AG04449 (cell line): ENCODE measurements at regions of chr3 and their contacts with region 1.

Region 1: GRCh38 chr3:73508330-73508954 is 116.3 kb downstream of the PDZRN3 start:
- DNase-seq: no peak
- H3K4me3 ChIP-seq: no peak overlapping the region
- CTCF ChIP-seq: peak; percentile 71

Region 2: DNA sequence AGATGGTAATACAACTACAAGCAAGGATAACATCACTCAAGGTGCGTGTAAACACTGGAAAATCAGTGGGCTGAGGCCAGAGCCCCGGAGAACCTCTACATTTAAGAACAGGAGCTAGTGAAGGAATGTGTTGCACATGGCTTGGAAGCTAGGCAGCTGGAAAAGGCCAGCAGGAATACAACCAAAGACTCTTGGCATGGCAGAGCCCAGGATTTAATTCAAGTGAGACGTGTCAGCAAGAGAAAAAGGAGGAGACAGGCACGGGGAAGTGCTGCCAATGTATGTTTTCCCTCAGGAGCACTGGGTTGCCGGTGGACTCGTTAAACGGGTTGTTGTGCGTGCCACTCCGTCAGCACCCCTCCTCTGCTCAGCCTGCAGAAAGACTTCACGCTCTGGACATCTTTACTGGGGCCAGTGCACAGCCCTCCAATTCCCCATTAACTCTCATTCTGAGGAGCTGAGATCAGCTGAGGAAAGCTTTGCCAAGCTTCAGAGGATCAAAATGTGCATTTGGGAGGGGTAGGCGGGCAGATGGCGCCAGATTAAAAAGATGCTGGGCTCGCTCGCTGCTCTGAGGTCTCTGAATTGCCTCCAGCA is 12.5 kb after region 1 on chr3:
- CTCF ChIA-PET with region 1: interaction called, 20 read pairs
- POLR2A ChIA-PET with region 1: no interaction called
- DNase-seq: no peak
- H3K4me3 ChIP-seq: peak overlapping the region; percentile 7; the same call in 1 of the 2 replicates
- CTCF ChIP-seq: no peak

Region 3: GRCh38 chr3:73602170-73602569 is 93.7 kb after region 1 on chr3:
- CTCF ChIA-PET with region 1: interaction called, 18 read pairs
- POLR2A ChIA-PET with region 1: no interaction called
- DNase-seq: peak; percentile 91
- H3K4me3 ChIP-seq: no peak overlapping the region
- CTCF ChIP-seq: no peak

Region 4: DNA sequence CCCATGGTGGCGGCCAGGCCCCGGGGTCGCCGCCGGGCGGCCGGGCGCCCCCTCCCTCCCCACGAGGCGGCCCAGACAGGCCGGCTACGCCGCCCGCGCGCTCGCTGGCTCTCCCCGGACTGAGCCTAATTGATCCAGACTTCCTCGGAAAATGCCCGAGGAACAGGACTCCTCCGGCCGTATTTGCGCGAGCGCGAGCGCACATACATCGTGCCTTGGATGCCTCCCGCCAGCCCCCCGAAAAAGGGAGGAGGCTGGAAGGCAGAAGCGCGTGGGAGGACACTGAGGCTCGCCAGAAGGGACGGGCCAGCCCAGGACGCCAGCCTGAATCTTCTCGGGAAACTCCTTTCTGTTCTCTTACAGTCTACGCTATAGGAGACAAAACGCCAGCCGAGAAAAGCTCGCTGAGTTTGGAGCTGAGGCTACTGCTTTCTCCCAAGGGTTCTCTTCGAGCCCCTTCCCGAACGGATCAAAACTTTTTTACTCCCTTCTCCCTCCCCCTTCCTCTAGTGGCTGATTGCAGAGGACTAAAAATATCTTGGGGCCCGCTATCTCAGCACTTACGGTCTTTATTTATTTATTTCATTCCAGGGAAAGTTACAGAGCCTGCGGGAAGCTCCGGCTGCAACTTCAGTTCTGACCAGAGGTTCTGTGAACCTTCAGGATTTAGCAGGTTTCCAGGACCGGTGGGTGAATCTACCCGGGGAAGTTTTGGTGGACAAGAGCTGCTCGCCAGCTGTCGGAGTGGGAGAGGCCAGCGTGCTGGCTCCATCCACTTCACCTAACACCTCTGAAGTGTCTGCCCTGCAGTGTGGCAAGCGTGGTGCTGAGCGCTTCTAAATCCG is 116.6 kb after region 1 on chr3 and contains the start of gene PDZRN3:
- CTCF ChIA-PET with region 1: interaction called, 46 read pairs
- POLR2A ChIA-PET with region 1: interaction called, 5 read pairs
- DNase-seq: no peak
- H3K4me3 ChIP-seq: peak within 1 kb of the TSS; percentile 80
- CTCF ChIP-seq: no peak

Region 5: GRCh38 chr3:73669260-73669659 is 160.8 kb after region 1 on chr3:
- CTCF ChIA-PET with region 1: no interaction called
- POLR2A ChIA-PET with region 1: no interaction called
- DNase-seq: no peak
- H3K4me3 ChIP-seq: no peak overlapping the region
- CTCF ChIP-seq: no peak

Region 6: GRCh38 chr3:73848173-73848906 is 339.9 kb after region 1 on chr3:
- CTCF ChIA-PET with region 1: interaction called, 64 read pairs
- POLR2A ChIA-PET with region 1: no interaction called
- DNase-seq: no peak
- H3K4me3 ChIP-seq: no peak overlapping the region
- CTCF ChIP-seq: peak; percentile 54